ENCODE measurements at regions of chr11 and their contacts with region 1.

Region 1: GRCh38 chr11:65204646-65205601 is 23.2 kb downstream of the CAPN1 start:
- DNase-seq: peak; percentile 78
- H3K4me3 ChIP-seq: no peak overlapping the region
- H3K27ac ChIP-seq: no peak overlapping the region
- H3K4me1 ChIP-seq: no peaks in the 10 kb centered on the region
- H3K27me3 ChIP-seq: no peaks in the 10 kb centered on the region
- CTCF ChIP-seq: peak; percentile 99

Region 2: GRCh38 chr11:64598797-64599697 is 605.9 kb before region 1 on chr11:
- CTCF ChIA-PET with region 1: no interaction called
- POLR2A ChIA-PET with region 1: no interaction called
- intact Hi-C with region 1: no loop called
- DNase-seq: no peak
- H3K4me3 ChIP-seq: no peak overlapping the region
- H3K27ac ChIP-seq: no peak overlapping the region
- H3K4me1 ChIP-seq: no peaks in the 10 kb centered on the region
- H3K27me3 ChIP-seq: no peaks in the 10 kb centered on the region
- CTCF ChIP-seq: no peak

Region 3: DNA sequence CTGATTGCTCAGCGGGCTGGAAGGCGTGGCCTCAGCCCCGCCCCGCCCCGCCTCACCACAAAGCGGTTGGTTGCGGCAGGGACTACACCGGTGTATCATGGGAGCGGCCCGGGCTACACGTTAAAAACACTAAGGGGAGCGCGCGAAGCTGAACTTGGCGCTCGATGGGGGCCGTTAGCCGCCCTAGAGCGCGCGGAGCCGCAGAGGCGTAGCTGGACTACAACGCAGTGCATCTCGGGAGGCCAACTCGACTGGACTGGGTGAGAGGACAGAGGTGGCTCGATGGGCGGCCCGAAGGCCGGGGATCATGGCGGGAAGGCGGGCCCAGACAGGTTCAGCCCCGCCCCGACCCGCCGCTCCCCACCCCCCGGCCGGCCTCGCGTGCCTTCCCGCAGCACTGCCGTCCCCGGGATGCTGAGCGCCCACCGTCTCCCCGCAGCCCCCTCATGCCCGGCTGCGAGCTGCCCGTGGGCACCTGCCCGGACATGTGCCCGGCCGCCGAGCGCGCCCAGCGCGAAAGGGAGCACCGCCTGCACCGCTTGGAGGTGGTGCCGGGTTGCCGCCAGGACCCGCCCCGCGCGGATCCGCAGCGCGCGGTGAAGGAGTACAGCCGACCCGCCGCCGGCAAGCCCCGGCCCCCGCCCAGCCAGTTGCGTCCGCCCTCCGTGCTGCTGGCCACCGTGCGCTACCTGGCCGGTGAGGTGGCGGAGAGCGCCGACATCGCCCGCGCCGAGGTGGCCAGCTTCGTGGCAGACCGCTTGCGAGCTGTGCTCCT is 163.9 kb before region 1 on chr11 and contains the start of gene SAC3D1:
- CTCF ChIA-PET with region 1: no interaction called
- POLR2A ChIA-PET with region 1: no interaction called
- intact Hi-C with region 1: no loop called
- DNase-seq: peak; percentile 99
- H3K4me3 ChIP-seq: peak within 1 kb of the TSS; percentile 91
- H3K27ac ChIP-seq: peak within 1 kb of the TSS; percentile 94
- H3K4me1 ChIP-seq: peaks cover 7% of the 10 kb centered on the region
- H3K27me3 ChIP-seq: no peaks in the 10 kb centered on the region
- CTCF ChIP-seq: no peak
- total RNA-seq, gene SAC3D1: 41.9 and 43.9 TPM in 2 replicates

Region 4: DNA sequence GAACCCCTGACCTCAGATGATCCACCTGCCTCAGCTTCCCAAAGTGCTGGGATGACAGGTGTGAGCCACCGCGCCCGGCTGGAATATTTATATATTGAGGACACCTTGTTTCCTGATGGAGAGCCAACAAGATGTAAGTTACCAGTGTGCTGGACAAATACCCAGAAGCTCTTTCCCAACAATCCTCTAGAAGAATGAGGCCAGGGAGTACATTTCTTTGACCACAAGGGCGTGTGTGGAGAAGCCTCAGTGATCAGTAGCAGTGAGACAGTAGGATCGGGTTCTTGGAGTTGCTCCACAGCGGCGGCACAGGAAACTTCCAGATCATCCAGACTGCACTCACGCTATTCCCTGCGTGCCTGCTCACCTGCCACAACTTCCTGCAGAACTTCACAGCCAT is 46.6 kb after region 1 on chr11:
- CTCF ChIA-PET with region 1: no interaction called
- POLR2A ChIA-PET with region 1: no interaction called
- intact Hi-C with region 1: loop called (anchors 5 kb)
- DNase-seq: no peak
- H3K4me3 ChIP-seq: no peak overlapping the region
- H3K27ac ChIP-seq: no peak overlapping the region
- H3K4me1 ChIP-seq: no peaks in the 10 kb centered on the region
- H3K27me3 ChIP-seq: no peaks in the 10 kb centered on the region
- CTCF ChIP-seq: no peak

Region 5: GRCh38 chr11:65314501-65315203 is 109.7 kb after region 1 on chr11 and contains the start of gene CDC42EP2:
- CTCF ChIA-PET with region 1: interaction called, 11 read pairs
- POLR2A ChIA-PET with region 1: no interaction called
- intact Hi-C with region 1: loop called (anchors 5 kb)
- DNase-seq: peak; percentile 85
- H3K4me3 ChIP-seq: peak within 1 kb of the TSS; percentile 80
- H3K27ac ChIP-seq: peak within 1 kb of the TSS; percentile 71
- H3K4me1 ChIP-seq: peaks cover 15% of the 10 kb centered on the region
- H3K27me3 ChIP-seq: no peaks in the 10 kb centered on the region
- CTCF ChIP-seq: no peak
- total RNA-seq, gene CDC42EP2: 4.8 and 5.4 TPM in 2 replicates

Region 6: DNA sequence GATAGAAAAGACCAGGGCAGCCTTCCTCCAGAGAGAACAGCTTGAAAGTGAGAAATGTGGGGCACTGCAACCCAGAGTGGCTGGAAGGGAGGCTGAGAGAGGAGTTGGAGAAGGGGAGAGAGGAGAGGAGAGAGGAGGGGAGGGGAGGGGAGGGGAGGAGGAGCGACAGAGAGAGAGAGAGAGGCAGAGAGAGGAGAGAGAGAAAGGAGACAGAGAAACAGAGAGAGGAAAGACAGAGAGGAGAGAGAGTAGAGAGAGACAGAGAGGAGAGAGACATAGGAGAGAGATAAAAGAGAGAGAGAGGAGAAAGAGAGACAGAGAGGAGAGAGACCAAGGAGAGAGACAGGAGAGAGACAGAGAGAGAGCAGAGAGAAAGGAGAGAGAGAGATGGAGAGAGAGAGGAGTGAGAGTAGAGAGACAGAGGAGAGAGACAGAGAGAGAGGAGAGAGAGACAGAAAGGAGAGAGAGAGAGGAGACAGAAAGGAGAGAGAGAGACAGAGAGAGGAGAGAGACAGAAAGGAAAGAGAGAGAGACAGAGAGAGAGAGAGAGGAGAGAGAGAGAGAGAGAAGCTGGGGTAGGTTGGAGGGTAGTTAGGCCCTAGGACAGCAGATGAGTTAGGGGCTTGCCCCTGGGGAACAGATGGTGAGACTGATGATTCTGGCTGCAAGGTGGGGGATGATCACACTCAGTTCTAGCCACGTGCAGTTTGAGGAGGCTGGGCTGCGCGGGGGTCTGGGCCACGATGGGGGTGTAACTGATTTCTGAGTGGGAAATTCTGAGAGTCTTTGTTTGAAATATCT is 311.4 kb after region 1 on chr11:
- CTCF ChIA-PET with region 1: no interaction called
- POLR2A ChIA-PET with region 1: no interaction called
- intact Hi-C with region 1: loop called (anchors 10 kb)
- DNase-seq: no peak
- H3K4me3 ChIP-seq: no peak overlapping the region
- H3K27ac ChIP-seq: peak overlapping the region; percentile 14
- H3K4me1 ChIP-seq: peaks cover 5% of the 10 kb centered on the region
- H3K27me3 ChIP-seq: no peaks in the 10 kb centered on the region
- CTCF ChIP-seq: no peak

Measured in A673 (cell line).